MCF 10A (cell line): ENCODE measurements at regions of chr6 and their contacts with region 1.

Region 1: GRCh38 chr6:30611150-30611855 is 5.7 kb downstream of the PPP1R10 start:
- DNase-seq: no peak
- H3K4me3 Mint-ChIP-seq: no peak overlapping the region
- H3K27ac Mint-ChIP-seq: peak overlapping the region; percentile 14
- H3K4me1 Mint-ChIP-seq: peaks cover 44% of the 10 kb centered on the region
- H3K27me3 Mint-ChIP-seq: no peaks in the 10 kb centered on the region
- CTCF ChIP-seq: no peak

Region 2: GRCh38 chr6:30600451-30600961 is 10.8 kb before region 1 on chr6:
- CTCF ChIA-PET with region 1: interaction called, 14 read pairs
- POLR2A ChIA-PET with region 1: interaction called, 107 read pairs
- intact Hi-C with region 1: no loop called
- DNase-seq: peak; percentile 20
- H3K4me3 Mint-ChIP-seq: no peak overlapping the region
- H3K27ac Mint-ChIP-seq: no peak overlapping the region
- H3K4me1 Mint-ChIP-seq: no peaks in the 10 kb centered on the region
- H3K27me3 Mint-ChIP-seq: no peaks in the 10 kb centered on the region
- CTCF ChIP-seq: no peak